Activated B cell treated with CpG ODN at 0.5 μM for 24 hours (primary cell): ENCODE measurements at regions of chr7 and their contacts with region 1.

Region 1: DNA sequence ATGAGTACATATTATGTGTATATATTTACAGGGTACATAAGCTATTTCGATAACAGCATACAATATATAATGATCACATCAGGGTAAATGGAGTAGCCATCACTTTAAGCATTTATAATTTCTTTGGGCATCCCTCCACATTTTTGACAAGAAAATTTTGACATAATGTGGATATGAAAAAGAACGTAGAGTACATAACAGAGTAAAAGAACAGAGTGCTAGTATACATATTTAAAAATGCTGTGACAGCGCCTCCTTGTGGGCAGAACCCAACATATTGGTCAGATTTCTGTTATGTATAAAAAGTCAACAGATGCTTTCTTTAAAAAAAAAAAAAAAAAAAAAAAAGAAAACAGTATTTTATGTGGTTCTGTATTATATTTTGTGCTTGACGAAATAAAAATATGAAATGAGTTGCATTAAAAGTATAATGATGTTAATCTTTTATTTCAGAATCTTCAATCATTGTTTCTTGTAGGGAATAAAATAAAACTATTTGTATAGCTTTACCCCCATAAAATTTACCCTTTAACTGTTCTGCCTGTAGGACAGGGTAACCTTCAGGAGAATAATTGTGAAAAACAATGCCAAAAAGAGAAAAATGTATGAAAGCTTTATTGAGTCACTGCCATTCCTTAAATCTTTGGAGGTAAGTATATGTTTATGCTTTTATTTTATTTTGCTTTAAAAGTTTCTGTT is 18.3 kb upstream of the HBP1 start:
- DNase-seq: peak; percentile 34
- ATAC-seq: peak; percentile 57
- H3K4me3 Mint-ChIP-seq: no peak overlapping the region
- H3K27ac Mint-ChIP-seq: no peak overlapping the region
- H3K4me1 Mint-ChIP-seq: peaks cover 7% of the 10 kb centered on the region
- H3K27me3 Mint-ChIP-seq: no peaks in the 10 kb centered on the region
- CTCF ChIP-seq: no peak

Region 2: DNA sequence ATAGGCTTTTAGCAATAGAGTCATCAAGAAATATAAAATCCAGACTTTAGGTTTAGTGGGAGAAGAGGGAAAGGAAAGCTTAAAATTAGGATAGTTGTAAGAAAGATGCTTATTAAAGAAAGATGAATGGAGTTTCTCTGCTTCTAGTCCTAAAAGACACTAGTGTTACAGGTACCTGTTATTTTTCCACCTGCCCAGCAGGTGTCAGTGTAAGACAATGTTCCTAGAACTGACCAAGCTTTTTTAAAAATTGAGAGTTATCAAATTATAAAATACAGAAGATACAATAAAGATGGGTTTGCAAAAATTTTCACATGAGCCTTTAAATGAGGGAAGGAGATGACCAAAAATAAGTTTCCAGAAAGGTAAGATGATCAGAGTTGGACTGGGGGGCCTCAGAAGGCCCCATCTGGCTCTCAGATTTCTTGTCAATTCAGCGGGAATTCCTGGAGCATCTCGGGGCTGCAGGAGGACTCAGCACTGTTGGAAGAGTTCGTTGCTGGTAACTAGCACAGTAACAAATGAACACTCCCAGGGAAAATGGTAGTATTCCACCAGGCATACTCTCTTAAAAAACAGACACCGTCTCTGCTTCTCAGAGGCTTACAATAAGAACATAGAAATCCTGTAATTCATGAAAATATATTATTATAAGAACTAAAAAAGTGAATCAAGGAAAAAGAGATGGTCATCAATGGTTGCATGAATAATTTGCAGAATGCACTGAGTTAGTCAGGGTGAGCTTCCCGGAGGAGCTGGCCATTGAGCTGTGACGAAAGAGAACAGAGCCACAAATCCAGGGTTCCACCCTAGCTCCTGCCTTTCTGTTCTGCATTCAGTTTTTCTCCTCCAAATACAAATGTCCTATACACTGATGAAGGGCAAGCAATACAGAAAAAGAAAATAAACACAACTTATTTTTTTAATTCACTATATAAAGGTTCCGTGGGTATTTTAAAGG is 357.2 kb before region 1 on chr7:
- CTCF ChIA-PET with region 1: interaction called, 166 read pairs
- POLR2A ChIA-PET with region 1: interaction called, 4 read pairs
- intact Hi-C with region 1: loop called (anchors 1 kb)
- DNase-seq: no peak
- ATAC-seq: peak; percentile 60
- H3K4me3 Mint-ChIP-seq: no peak overlapping the region
- H3K27ac Mint-ChIP-seq: no peak overlapping the region
- H3K4me1 Mint-ChIP-seq: peaks cover 2% of the 10 kb centered on the region
- H3K27me3 Mint-ChIP-seq: peaks cover 4% of the 10 kb centered on the region
- CTCF ChIP-seq: peak; percentile 92

Region 3: GRCh38 chr7:106870983-106871410 is 279.5 kb before region 1 on chr7:
- CTCF ChIA-PET with region 1: interaction called, 8 read pairs
- POLR2A ChIA-PET with region 1: no interaction called
- intact Hi-C with region 1: loop called (anchors 5 kb)
- DNase-seq: no peak
- ATAC-seq: peak; percentile 77
- H3K4me3 Mint-ChIP-seq: peak overlapping the region; percentile 74
- H3K27ac Mint-ChIP-seq: peak overlapping the region; percentile 86
- H3K4me1 Mint-ChIP-seq: peaks cover 77% of the 10 kb centered on the region
- H3K27me3 Mint-ChIP-seq: no peaks in the 10 kb centered on the region
- CTCF ChIP-seq: no peak

Region 4: DNA sequence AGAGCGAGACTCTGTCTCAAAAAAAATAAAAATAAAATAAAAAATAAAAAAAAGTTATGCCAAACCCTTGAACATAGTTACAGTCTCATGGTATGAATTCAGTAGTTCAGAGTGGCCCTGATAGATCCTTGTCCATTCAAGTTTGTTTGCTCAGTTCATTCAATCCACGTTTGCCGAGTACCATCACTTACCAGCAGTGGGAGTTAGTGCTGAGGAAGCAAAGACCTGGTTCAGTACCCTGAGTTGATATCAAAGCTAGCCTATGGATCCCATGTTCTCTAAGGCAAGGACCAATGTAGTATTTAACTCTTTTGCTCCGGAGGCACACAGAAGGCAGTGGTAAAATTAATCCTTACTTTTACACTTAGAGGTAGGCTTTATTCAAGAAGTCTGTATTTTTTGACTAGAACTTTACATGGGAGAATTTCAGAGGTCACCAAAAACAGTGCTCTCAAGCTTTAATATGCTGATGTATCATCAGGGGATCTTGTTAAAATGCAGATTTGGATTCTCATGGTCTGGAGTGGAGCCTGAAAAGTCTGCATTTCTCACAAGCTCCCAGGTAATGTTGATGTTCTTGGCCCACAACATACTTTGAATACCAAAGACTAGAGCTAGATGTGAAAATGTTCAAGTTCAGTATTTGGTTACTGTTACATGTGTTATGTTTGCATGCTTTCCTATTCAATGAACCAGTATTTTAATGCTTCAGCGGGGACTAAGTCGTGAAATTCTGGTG is 19.9 kb before region 1 on chr7:
- CTCF ChIA-PET with region 1: interaction called, 10 read pairs
- POLR2A ChIA-PET with region 1: no interaction called
- intact Hi-C with region 1: no loop called
- DNase-seq: no peak
- ATAC-seq: no peak
- H3K4me3 Mint-ChIP-seq: no peak overlapping the region
- H3K27ac Mint-ChIP-seq: no peak overlapping the region
- H3K4me1 Mint-ChIP-seq: peaks cover 11% of the 10 kb centered on the region
- H3K27me3 Mint-ChIP-seq: no peaks in the 10 kb centered on the region
- CTCF ChIP-seq: no peak

Region 5: DNA sequence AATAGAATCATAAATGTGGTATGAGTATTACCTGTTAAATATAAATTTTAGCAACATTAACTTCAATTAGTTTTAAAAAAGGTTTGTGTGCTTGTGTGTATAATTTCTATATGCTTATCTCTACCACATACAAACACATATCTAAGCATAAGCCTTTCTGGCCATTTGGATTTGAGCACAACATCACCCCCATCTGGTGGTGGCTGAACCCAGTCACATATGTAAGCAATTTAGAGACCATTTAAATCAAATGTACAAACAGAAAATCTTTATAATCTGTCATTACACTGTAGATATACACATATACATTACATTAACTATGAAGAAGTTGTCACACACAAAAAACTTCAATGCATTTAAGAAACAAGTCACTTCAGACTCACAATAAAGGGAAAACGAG is 351.1 kb after region 1 on chr7:
- CTCF ChIA-PET with region 1: interaction called, 4 read pairs
- POLR2A ChIA-PET with region 1: no interaction called
- intact Hi-C with region 1: loop called (anchors 1 kb)
- DNase-seq: no peak
- ATAC-seq: no peak
- H3K4me3 Mint-ChIP-seq: no peak overlapping the region
- H3K27ac Mint-ChIP-seq: no peak overlapping the region
- H3K4me1 Mint-ChIP-seq: no peaks in the 10 kb centered on the region
- H3K27me3 Mint-ChIP-seq: no peaks in the 10 kb centered on the region
- CTCF ChIP-seq: no peak

Region 6: DNA sequence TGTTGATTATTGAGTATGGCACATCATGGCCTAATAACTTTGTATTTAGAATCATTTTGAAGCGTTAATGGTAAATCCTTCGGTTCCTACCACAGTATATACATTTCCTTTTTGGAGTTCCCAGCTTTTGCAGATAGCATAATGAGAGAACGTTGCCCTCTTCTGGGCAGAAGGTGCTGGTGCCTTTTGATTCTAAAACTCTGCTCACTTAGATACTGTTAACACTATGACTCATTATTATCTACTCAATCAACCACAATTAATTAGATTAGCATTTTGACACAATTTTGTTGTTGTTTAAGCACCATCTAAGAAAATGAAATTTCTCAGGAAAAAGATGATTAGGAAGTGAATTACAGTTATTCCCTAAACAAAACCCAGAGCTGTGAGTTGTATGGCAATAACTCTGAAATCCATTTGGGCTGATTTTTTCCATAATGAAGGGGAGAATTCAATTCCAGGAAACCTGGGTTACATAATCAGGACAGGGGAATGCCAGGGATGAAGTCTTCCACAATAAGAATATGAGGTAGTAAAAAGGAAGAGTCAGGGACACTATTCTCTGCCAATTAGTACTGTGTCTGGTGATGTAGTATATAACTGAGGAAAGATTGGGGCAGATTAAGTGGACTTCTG is 729.0 kb after region 1 on chr7:
- CTCF ChIA-PET with region 1: interaction called, 3 read pairs
- POLR2A ChIA-PET with region 1: no interaction called
- intact Hi-C with region 1: loop called (anchors 1 kb)
- DNase-seq: no peak
- ATAC-seq: peak; percentile 74
- H3K4me3 Mint-ChIP-seq: no peak overlapping the region
- H3K27ac Mint-ChIP-seq: no peak overlapping the region
- H3K4me1 Mint-ChIP-seq: peaks cover under 1% of the 10 kb centered on the region
- H3K27me3 Mint-ChIP-seq: peaks cover 20% of the 10 kb centered on the region
- CTCF ChIP-seq: no peak